ENCODE measurements at regions of chr2 and their contacts with region 1.

Region 1: GRCh38 chr2:198639580-198639979 is 818.2 kb downstream of the SATB2 start:
- DNase-seq: no peak
- ATAC-seq: no peak
- H3K4me3 ChIP-seq: no peak overlapping the region
- H3K27ac ChIP-seq: no peak overlapping the region
- H3K4me1 ChIP-seq: no peaks in the 10 kb centered on the region
- H3K27me3 ChIP-seq: no peaks in the 10 kb centered on the region
- CTCF ChIP-seq: no peak

Region 2: GRCh38 chr2:198698230-198698629 is 58.6 kb after region 1 on chr2:
- intact Hi-C with region 1: loop called in 1 of 10 experiments (anchors 2 kb)
- DNase-seq: no peak
- ATAC-seq: no peak
- H3K4me3 ChIP-seq: no peak overlapping the region
- H3K27ac ChIP-seq: no peak overlapping the region
- H3K4me1 ChIP-seq: no peaks in the 10 kb centered on the region
- H3K27me3 ChIP-seq: no peaks in the 10 kb centered on the region
- CTCF ChIP-seq: no peak